GM10248 (cell line): ENCODE measurements at regions of chr2 and their contacts with region 1.

Region 1: GRCh38 chr2:66729416-66730300 is 294.7 kb downstream of the MEIS1 start:
- DNase-seq: no peak
- CTCF ChIP-seq: no peak

Region 2: GRCh38 chr2:66408905-66409304 is 320.8 kb before region 1 on chr2:
- CTCF ChIA-PET with region 1: no interaction called
- POLR2A ChIA-PET with region 1: no interaction called
- DNase-seq: no peak
- CTCF ChIP-seq: no peak

Region 3: DNA sequence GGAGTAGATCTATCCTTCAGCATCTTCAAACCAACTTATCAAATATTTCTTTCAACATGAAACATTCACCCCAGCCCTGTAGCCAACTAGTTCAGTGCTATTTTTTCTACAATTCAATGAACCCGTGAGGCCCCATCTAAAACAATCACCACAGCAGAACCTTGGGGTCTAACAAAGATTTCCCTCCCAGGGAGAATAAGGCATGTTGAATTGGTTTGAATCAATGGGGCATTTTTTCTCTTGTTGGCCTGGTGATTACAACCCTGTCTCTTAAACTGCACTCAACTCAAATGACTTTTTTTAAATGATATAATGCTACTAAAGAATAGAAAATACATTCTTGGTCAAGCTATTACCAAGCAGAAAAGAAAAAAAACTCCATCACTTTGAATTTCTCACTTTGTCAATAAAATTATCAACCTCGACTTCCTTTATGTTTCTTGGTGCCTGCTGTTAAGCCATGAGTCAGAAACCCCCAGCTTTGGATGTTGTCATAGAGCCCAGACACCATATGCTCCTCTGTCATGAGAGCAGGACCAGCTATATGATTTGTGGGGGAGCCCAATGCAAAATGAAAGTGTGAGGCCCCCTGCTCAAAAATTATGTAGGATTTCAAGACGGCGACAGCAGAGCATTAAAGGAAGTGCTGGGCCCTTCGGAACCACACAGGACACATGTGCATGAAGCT is 12.3 kb before region 1 on chr2:
- CTCF ChIA-PET with region 1: interaction called, 10 read pairs
- POLR2A ChIA-PET with region 1: no interaction called
- DNase-seq: no peak
- CTCF ChIP-seq: no peak